ENCODE measurements at regions of chr6 and their contacts with region 1.

Region 1: DNA sequence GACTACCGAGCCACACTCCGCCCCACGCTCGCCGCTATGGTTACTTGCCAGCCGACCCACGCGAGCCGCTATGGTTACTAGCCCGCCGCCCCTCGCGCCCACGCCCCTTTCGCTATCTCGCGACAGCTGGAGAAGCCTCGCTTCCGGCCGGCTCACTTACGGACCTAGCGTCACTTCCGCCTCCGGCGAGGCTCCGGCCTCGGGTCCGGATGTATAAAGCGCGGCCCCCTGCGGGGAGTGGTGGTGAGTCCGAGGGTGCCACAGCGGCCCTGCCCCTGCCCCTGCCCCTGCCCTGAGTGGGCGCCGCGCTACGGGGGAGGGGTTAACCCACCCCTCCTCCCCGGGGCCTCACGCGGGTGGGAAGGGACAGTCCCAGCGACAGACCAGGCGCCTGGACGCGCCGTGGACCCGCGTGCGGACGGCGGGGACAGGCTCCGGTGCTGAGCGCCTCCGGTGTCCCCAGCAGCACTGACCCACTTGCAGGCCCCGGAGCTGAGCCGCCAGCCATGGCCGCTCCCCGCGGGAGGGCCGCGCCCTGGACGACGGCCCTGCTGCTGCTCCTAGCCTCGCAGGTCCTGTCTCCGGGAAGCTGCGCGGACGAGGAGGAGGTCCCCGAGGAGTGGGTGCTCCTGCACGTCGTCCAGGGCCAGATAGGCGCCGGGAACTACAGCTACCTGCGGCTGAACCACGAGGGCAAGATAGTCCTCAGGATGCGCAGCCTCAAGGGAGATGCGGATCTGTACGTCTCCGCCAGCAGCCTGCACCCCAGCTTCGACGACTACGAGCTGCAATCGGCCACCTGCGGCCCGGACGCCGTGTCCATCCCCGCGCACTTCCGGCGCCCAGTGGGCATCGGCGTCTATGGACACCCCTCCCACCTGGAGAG is at the starts of genes C6orf120 and WDR27:
- DNase-seq: peak; percentile 54
- H3K4me3 ChIP-seq: peak within 1 kb of the TSS; percentile 83
- CTCF ChIP-seq: no peak

Region 2: GRCh38 chr6:169473663-169474062 is 228.5 kb before region 1 on chr6:
- CTCF ChIA-PET with region 1: no interaction called
- POLR2A ChIA-PET with region 1: no interaction called
- DNase-seq: no peak
- H3K4me3 ChIP-seq: no peak overlapping the region
- CTCF ChIP-seq: no peak

Region 3: DNA sequence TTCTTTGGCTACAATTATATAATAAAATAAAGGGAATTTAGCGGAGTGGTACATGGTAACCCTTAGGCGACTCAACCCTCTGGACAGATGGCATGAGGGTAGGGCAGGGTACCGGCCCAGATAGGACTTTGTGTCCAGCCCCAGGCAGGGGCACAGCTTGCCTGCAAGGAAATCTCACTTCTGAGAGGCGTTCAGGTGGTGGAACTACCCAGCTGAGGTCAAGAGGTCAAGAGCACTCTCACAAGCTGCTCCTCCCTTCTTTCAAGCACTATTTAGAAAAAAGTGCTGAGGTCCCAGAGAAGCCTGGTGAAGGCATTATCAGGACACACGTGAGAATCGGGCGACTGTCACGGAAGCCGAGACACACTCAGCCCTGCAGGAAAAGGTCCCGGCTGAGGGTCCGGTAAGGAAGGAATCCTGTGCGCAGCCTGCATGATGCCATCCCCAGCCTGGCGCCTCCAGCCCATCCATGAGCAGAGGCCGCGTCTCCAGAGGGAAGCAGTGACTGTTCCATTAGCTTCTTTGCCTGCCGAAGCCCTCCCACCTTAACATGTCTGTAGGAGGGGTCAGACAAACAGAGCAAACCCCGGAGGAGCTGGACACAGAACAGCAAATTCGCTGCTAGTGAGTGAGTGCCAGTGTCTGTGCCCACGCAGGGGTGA is 55.2 kb before region 1 on chr6:
- CTCF ChIA-PET with region 1: no interaction called
- POLR2A ChIA-PET with region 1: no interaction called
- DNase-seq: no peak
- H3K4me3 ChIP-seq: no peak overlapping the region
- CTCF ChIP-seq: no peak

Region 4: GRCh38 chr6:169714178-169714577 is 12.0 kb after region 1 on chr6:
- CTCF ChIA-PET with region 1: interaction called, 27 read pairs
- POLR2A ChIA-PET with region 1: no interaction called
- DNase-seq: no peak
- H3K4me3 ChIP-seq: no peak overlapping the region
- CTCF ChIP-seq: no peak

Measured in AG04449 (cell line).